Activated B cell treated with CpG ODN at 0.5 μM for 24 hours (primary cell): ENCODE measurements at regions of chr5 and their contacts with region 1.

Region 1: DNA sequence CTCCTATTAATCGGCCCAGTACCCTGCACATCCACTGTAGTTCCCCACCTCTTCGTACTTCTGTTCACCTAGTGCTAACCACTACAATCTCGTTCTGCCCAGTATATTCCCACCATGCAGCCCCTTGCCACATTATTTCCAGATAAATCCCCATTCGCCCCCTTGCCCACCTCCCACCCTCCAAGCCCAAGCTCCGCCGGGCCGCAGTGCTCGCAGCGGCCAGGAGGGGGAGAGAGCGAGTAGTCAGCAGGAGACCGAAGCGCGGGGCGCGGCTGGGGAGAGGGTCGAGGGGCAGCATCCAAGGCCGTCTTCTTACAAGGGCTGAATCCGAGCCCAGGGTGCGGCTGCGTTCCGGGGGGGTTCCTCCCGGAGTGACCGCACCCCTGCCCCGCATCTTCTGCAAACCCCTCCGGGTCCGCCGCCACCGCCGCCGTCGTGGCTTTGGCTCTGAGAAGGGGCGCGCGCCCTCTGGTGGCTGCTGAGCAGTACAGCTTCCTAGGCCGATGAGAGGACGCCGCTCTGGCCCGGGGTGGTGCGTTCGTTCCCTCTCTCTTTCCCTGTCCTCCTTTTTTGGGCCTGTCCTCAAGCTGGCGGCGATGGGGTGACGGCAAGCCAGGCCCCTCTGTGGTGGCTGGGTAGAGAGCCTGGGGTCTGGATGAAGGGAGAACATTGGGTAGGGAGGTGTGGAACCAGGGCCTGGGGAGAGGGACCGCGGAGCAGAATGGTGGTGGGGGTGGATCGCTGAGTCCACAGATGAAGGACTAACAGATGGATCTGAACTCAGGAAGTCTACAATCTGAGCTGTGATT is 30.0 kb upstream of the PSD2 start:
- DNase-seq: peak; percentile 87
- ATAC-seq: peak; percentile 86
- H3K4me3 Mint-ChIP-seq: peak overlapping the region; percentile 74
- H3K27ac Mint-ChIP-seq: peak overlapping the region; percentile 56
- H3K4me1 Mint-ChIP-seq: peaks cover 25% of the 10 kb centered on the region
- H3K27me3 Mint-ChIP-seq: peaks cover 9% of the 10 kb centered on the region
- CTCF ChIP-seq: peak; percentile 98

Region 2: DNA sequence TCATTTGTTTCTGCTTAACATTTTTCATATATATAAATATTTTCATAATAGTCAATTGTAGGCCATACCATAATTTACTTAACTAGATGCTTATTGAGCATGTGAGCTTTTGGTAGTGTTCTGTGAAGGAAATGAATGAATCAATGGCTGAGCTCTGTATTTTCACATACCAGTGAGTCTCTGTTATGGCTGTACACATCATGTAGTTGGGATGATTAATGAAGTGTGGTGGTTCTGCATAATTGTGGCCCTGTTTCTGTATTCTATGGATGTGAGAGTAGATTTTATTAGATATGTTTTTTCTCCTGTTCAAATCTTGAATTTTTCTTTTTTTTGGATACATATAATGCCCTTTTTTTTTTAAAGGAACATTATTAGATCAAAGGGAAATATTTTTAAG is 956.2 kb before region 1 on chr5:
- CTCF ChIA-PET with region 1: no interaction called
- POLR2A ChIA-PET with region 1: no interaction called
- intact Hi-C with region 1: no loop called
- DNase-seq: no peak
- ATAC-seq: no peak
- H3K4me3 Mint-ChIP-seq: no peak overlapping the region
- H3K27ac Mint-ChIP-seq: no peak overlapping the region
- H3K4me1 Mint-ChIP-seq: peaks cover 10% of the 10 kb centered on the region
- H3K27me3 Mint-ChIP-seq: no peaks in the 10 kb centered on the region
- CTCF ChIP-seq: no peak

Region 3: GRCh38 chr5:139574641-139575312 is 190.8 kb before region 1 on chr5:
- CTCF ChIA-PET with region 1: interaction called, 10 read pairs
- POLR2A ChIA-PET with region 1: no interaction called
- intact Hi-C with region 1: loop called (anchors 2 kb)
- DNase-seq: no peak
- ATAC-seq: peak; percentile 70
- H3K4me3 Mint-ChIP-seq: no peak overlapping the region
- H3K27ac Mint-ChIP-seq: peak overlapping the region; percentile 42
- H3K4me1 Mint-ChIP-seq: peaks cover 81% of the 10 kb centered on the region
- H3K27me3 Mint-ChIP-seq: no peaks in the 10 kb centered on the region
- CTCF ChIP-seq: peak; percentile 28

Region 4: GRCh38 chr5:139651853-139652787 is 113.5 kb before region 1 on chr5:
- CTCF ChIA-PET with region 1: interaction called, 10 read pairs
- POLR2A ChIA-PET with region 1: interaction called, 12 read pairs
- intact Hi-C with region 1: loop called (anchors 1 kb)
- DNase-seq: peak; percentile 91
- ATAC-seq: peak; percentile 56
- H3K4me3 Mint-ChIP-seq: peak overlapping the region; percentile 98
- H3K27ac Mint-ChIP-seq: peak overlapping the region; percentile 85
- H3K4me1 Mint-ChIP-seq: peaks cover 76% of the 10 kb centered on the region
- H3K27me3 Mint-ChIP-seq: no peaks in the 10 kb centered on the region
- CTCF ChIP-seq: no peak

Region 5: GRCh38 chr5:139670369-139671095 is 95.1 kb before region 1 on chr5:
- CTCF ChIA-PET with region 1: interaction called, 5 read pairs
- POLR2A ChIA-PET with region 1: interaction called, 17 read pairs
- intact Hi-C with region 1: loop called (anchors 1 kb)
- DNase-seq: peak; percentile 65
- ATAC-seq: peak; percentile 61
- H3K4me3 Mint-ChIP-seq: peak overlapping the region; percentile 86
- H3K27ac Mint-ChIP-seq: peak overlapping the region; percentile 92
- H3K4me1 Mint-ChIP-seq: peaks cover 92% of the 10 kb centered on the region
- H3K27me3 Mint-ChIP-seq: no peaks in the 10 kb centered on the region
- CTCF ChIP-seq: no peak

Region 6: DNA sequence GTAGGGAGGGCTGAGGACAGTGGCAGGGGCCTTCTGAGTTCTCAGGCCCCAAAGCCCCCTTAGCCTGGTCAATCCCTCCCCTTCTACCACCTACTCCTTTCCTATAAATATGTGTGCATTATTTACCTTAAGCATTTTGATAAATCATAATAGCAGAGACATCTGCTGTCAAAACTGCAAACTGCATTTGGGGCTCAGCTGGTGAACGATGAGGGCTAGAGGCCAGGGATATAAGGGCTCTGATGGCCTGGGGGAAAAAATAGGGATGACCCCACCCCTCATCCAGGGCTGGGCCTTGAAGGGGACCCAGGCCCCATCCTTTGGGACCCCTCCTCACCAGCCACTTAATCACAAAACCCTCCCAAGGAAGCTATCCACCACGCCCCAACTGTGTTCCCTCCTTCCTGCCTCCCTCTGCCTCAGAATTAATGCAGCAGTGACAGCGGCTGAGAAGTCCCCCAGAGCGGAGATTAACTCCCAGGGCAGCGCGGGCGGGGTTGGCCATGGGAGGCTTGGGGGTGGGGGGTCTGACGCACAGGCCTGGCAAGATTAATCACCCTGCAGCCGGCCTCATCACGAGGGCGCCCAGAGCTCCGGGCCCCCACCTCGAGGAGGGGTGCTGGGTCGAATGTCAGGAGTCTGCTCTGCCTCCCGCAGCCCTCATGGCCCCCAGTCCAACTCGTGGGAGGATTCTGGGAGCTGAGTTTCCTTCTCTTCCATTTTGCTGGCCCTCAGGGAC is 75.4 kb before region 1 on chr5:
- CTCF ChIA-PET with region 1: interaction called, 26 read pairs
- POLR2A ChIA-PET with region 1: interaction called, 6 read pairs
- intact Hi-C with region 1: loop called (anchors 1 kb)
- DNase-seq: no peak
- ATAC-seq: peak; percentile 56
- H3K4me3 Mint-ChIP-seq: no peak overlapping the region
- H3K27ac Mint-ChIP-seq: peak overlapping the region; percentile 67
- H3K4me1 Mint-ChIP-seq: peaks cover 53% of the 10 kb centered on the region
- H3K27me3 Mint-ChIP-seq: no peaks in the 10 kb centered on the region
- CTCF ChIP-seq: peak; percentile 19

Region 7: GRCh38 chr5:139696894-139697658 is 68.5 kb before region 1 on chr5:
- CTCF ChIA-PET with region 1: interaction called, 26 read pairs
- POLR2A ChIA-PET with region 1: interaction called, 5 read pairs
- intact Hi-C with region 1: no loop called
- DNase-seq: no peak
- ATAC-seq: peak; percentile 45
- H3K4me3 Mint-ChIP-seq: peak overlapping the region; percentile 78
- H3K27ac Mint-ChIP-seq: peak overlapping the region; percentile 61
- H3K4me1 Mint-ChIP-seq: peaks cover 53% of the 10 kb centered on the region
- H3K27me3 Mint-ChIP-seq: peaks cover 15% of the 10 kb centered on the region
- CTCF ChIP-seq: no peak

Region 8: GRCh38 chr5:139725073-139725830 is 40.4 kb before region 1 on chr5:
- CTCF ChIA-PET with region 1: interaction called, 4 read pairs
- POLR2A ChIA-PET with region 1: interaction called, 19 read pairs
- intact Hi-C with region 1: loop called (anchors 2 kb)
- DNase-seq: no peak
- ATAC-seq: no peak
- H3K4me3 Mint-ChIP-seq: no peak overlapping the region
- H3K27ac Mint-ChIP-seq: no peak overlapping the region
- H3K4me1 Mint-ChIP-seq: peaks cover 17% of the 10 kb centered on the region
- H3K27me3 Mint-ChIP-seq: no peaks in the 10 kb centered on the region
- CTCF ChIP-seq: no peak